Psoas muscle (tissue), 8 donors: ENCODE measurements at regions of chr22 and their contacts with region 1.

Region 1: GRCh38 chr22:17119481-17120202 is 1.5 kb downstream of the TMEM121B start:
- DNase-seq: peak in 1 of 2 donors; percentile 80
- ATAC-seq: peak; percentile 48 to 81 (median 76)
- H3K4me3 ChIP-seq: peak overlapping the region; percentile 30
- H3K27ac ChIP-seq: no peak overlapping the region
- H3K4me1 ChIP-seq: peaks cover 5% of the 10 kb centered on the region
- H3K27me3 ChIP-seq: peaks cover 0 to 8% (median 0%) of the 10 kb centered on the region in 3 donors
- CTCF ChIP-seq: peak; percentile 56

Region 2: GRCh38 chr22:17158568-17159503 is 39.2 kb after region 1 on chr22 and contains the start of gene HDHD5:
- intact Hi-C with region 1: loop called in 1 of 2 experiments (anchors 5 kb)
- DNase-seq: peak; percentile 94 to 96
- ATAC-seq: peak; percentile 89 to 92 (median 90)
- H3K4me3 ChIP-seq: peak within 1 kb of the TSS; percentile 83
- H3K27ac ChIP-seq: peak within 1 kb of the TSS; percentile 87
- H3K4me1 ChIP-seq: peaks cover 32% of the 10 kb centered on the region
- H3K27me3 ChIP-seq: no peaks in the 10 kb centered on the region
- CTCF ChIP-seq: no peak
- total RNA-seq, gene HDHD5: 24.6 to 46.7 (median 28.9) TPM

Region 3: GRCh38 chr22:17164392-17165024 is 44.9 kb after region 1 on chr22:
- intact Hi-C with region 1: loop called (anchors 5 kb)
- DNase-seq: no peak
- ATAC-seq: no peak
- H3K4me3 ChIP-seq: no peak overlapping the region
- H3K27ac ChIP-seq: no peak overlapping the region
- H3K4me1 ChIP-seq: peaks cover 12% of the 10 kb centered on the region
- H3K27me3 ChIP-seq: no peaks in the 10 kb centered on the region
- CTCF ChIP-seq: no peak

Region 4: DNA sequence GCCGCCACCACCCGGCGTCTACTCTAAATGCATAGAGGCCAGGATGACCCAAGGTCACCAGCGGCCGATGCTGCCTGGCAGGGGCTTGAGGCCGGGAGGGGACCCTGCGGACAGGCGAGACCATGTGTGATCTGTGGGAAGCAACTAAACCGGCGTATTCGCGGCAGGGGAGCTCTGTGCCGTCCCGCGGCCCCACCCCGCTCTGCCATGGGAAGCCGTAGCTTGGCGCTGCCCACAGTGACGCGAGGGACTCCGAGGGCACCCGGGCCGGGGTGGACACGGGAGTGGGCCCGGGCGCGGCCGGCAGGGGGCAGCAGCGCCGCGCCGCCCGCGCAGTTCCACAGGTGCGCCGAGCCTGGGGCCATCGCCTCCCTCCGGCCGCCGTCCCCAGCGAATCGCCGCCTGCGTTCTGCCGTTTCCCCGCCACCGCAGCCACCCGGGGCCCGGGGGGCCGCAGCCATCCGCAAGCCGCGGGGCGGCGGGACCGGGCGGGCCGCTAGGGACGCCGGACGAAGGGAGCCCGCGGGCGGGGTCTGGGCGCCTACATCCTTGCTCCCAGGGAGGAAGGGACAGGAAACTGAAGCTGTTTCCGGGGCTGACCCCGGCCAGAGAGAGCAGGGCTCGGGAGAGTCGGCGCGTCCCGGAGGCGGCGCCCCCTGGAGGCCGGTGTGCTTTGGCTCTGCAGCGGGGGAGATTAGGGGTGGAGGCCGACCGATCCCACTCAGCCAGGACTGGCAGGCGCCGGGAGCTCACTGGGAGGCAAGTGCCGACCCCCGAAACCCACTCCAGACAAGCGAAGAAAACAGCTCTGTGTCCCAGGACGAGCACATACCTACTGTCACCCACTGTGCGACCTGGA is 51.9 kb after region 1 on chr22:
- intact Hi-C with region 1: loop called (anchors 1 to 5 kb)
- DNase-seq: peak; percentile 93 to 96
- ATAC-seq: peak; percentile 90 to 97 (median 92)
- H3K4me3 ChIP-seq: peak overlapping the region; percentile 71
- H3K27ac ChIP-seq: peak overlapping the region; percentile 92
- H3K4me1 ChIP-seq: peaks cover 17% of the 10 kb centered on the region
- H3K27me3 ChIP-seq: no peaks in the 10 kb centered on the region
- CTCF ChIP-seq: peak; percentile 79

Region 5: DNA sequence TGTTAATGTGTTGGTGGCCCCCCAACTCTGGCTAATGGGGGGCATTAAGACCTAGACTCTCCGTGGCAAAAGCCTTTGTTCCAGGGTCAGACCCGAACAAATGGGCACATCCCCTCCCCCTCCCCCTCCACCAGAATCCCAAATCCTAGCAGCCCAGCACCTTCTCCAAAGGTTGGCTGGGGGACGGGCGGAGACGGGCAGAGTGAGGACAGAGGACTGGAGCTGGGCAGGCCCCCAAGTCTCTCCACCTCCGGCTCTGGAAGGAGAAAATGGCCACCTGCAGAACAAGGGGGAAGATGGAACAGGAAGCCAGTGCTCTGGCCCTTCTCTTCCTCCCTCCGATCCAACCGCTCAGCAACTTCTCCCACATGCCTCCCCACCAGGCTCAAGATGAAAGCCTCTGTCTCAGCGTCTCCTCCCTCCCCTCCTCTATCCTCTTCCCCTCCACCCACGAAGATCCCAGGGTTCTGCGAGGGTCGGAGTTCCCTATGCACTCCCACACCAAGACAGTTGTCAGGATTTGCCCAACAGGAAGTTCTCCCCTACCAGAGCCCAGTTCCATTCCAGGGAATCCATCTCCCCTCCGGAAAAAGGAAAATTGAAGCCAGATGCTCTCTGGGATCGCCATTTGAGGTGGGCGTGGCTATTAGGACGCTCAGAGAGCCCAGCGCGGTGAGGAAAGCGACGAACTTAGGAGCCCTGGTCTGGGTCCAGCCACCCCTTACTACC is 79.5 kb after region 1 on chr22:
- intact Hi-C with region 1: loop called in 1 of 2 experiments (anchors 5 kb)
- DNase-seq: peak; percentile 45 to 67
- ATAC-seq: peak; percentile 41 to 63 (median 52)
- H3K4me3 ChIP-seq: peak overlapping the region; percentile 58
- H3K27ac ChIP-seq: peak overlapping the region; percentile 63
- H3K4me1 ChIP-seq: no peaks in the 10 kb centered on the region
- H3K27me3 ChIP-seq: no peaks in the 10 kb centered on the region
- CTCF ChIP-seq: no peak